ENCODE measurements at regions of chr15 and their contacts with region 1.

Region 1: DNA sequence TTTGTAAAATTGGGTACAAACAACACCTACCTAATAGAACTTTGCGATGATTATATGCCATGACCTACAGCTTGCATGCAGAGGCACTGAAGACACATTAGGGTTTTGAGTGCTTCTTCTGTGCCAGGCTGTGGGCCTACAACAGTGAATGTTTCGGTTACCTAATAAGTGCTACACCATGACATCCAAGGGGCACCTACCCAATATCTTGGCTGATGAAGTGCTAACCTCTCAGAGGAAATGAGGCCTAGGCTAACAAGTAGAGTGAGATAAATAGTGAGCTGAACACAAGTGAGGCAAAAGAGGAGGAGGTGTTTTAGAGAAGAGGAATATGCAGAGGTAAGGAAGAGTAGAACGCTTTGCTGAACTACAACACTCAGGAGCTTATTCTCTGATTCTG is 12.2 kb upstream of the RASGRP1 start:
- DNase-seq: no peak
- ATAC-seq: no peak
- H3K4me3 ChIP-seq: no peak overlapping the region
- H3K27ac ChIP-seq: no peak overlapping the region
- H3K4me1 ChIP-seq: peaks cover 0 to 3% of the 10 kb centered on the region in 2 experiments; a peak in 3 of 5 replicates
- H3K27me3 ChIP-seq: peaks cover 4 to 12% of the 10 kb centered on the region in 2 experiments; a peak in 4 of 5 replicates
- CTCF ChIP-seq: no peak
- EP300 ChIP-seq: no peak
- POLR2A ChIP-seq: no peak
- RAD21 ChIP-seq: no peak

Region 2: DNA sequence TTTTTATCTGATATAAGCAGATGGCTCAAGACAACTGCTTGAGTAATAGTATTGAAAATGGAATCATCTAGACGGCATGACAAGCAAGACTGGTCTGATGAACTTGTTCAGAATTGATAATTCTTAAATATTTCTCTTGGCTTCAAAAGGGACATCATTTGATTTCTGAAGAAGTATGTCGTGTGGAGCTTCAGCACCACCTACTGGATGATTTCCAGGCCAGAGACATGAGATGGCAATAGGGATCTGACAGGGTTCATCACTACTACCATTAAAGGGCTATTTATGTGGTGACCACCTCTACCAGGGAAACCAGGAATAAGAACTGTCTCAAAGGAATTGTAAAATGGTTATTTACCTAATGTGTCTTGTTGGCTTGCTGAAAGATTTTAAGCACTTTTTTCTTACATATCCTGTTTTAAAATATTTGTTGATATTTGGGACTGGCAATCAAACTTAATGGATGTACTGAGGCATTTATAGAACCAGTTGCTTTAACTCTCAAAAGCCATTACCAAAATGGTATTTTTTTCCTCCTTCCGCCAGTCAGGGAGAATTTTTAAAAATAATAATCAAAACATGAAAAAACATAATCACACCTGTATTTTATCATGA is 222.4 kb before region 1 on chr15:
- CTCF ChIA-PET with region 1: no interaction called
- POLR2A ChIA-PET with region 1: no interaction called
- in situ Hi-C with region 1: no loop called
- intact Hi-C with region 1: no loop called
- DNase-seq: peak; percentile 39 to 73 (median 42)
- ATAC-seq: peak; percentile 92
- H3K4me3 ChIP-seq: no peak overlapping the region
- H3K27ac ChIP-seq: no peak overlapping the region
- H3K4me1 ChIP-seq: no peaks in the 10 kb centered on the region
- H3K27me3 ChIP-seq: no peaks in the 10 kb centered on the region
- CTCF ChIP-seq: peak; percentile 57 to 77 (median 77)
- EP300 ChIP-seq: no peak
- POLR2A ChIP-seq: no peak
- RAD21 ChIP-seq: peak; percentile 75 to 82

Region 3: GRCh38 chr15:38414357-38414756 is 162.5 kb before region 1 on chr15:
- CTCF ChIA-PET with region 1: no interaction called
- POLR2A ChIA-PET with region 1: no interaction called
- in situ Hi-C with region 1: no loop called
- intact Hi-C with region 1: no loop called
- DNase-seq: peak; percentile 14 to 68 (median 40)
- ATAC-seq: peak; percentile 97
- H3K4me3 ChIP-seq: no peak overlapping the region
- H3K27ac ChIP-seq: no peak overlapping the region
- H3K4me1 ChIP-seq: no peaks in the 10 kb centered on the region
- H3K27me3 ChIP-seq: peaks cover 3 to 13% of the 10 kb centered on the region in 2 experiments; a peak in 2 of 5 replicates
- CTCF ChIP-seq: peak; percentile 60 to 67 (median 62)
- EP300 ChIP-seq: no peak
- POLR2A ChIP-seq: no peak
- RAD21 ChIP-seq: peak; percentile 43 to 69

Region 4: DNA sequence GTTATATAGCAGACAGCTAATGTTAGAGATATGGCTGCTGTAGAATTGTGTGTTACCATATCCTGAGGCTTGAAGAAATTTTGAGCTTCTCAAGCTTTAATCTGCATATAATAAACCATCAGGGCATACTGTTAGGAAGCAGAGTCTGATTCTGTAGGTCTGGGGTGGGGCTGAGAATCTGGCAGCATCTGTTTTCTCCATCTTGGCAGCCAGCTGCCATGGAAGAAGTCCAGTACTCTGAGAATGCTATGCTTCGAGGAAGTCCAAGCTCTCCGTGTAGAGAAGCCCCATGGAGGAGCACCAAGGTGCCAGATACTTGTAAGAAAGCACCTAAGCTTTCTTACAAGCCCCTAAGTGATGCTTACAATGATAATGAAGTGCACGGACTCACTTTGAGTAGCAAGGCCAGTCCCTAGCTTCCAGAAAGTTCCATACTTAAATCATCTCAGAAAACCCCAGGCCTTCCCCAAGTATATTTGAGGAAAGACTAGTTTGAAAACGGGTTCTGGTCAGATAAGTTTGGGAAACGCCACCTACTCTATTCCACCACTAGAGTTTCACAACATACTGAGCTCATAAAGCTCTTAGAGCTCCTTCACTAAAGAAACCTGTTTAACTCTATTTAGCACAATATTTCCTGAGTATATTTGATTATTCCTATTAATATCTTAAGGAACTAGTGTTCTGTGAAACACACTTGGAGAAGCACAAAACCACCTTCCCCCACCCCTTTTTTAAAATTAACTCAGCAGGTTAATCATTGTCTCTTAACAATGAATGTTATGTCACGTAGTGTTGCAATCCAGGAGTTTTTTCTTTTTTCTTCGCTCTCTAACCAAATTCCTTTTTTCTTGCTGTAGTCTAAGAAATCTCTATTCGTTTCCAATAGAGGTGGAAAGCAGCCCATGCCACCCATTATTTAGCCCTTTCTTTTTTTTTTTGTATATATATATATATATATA is 47.7 kb after region 1 on chr15:
- CTCF ChIA-PET with region 1: no interaction called
- POLR2A ChIA-PET with region 1: interaction called, 3 read pairs
- in situ Hi-C with region 1: loop called (anchors 5 kb)
- intact Hi-C with region 1: no loop called
- DNase-seq: no peak
- ATAC-seq: no peak
- H3K4me3 ChIP-seq: no peak overlapping the region
- H3K27ac ChIP-seq: no peak overlapping the region
- H3K4me1 ChIP-seq: peaks cover 0 to 2% of the 10 kb centered on the region in 2 experiments; a peak in 2 of 5 replicates
- H3K27me3 ChIP-seq: peaks cover 0 to 4% of the 10 kb centered on the region in 2 experiments; a peak in 3 of 5 replicates
- CTCF ChIP-seq: no peak
- EP300 ChIP-seq: no peak
- POLR2A ChIP-seq: no peak
- RAD21 ChIP-seq: no peak